BJ (cell line): ENCODE measurements at regions of chr3 and their contacts with region 1.

Region 1: DNA sequence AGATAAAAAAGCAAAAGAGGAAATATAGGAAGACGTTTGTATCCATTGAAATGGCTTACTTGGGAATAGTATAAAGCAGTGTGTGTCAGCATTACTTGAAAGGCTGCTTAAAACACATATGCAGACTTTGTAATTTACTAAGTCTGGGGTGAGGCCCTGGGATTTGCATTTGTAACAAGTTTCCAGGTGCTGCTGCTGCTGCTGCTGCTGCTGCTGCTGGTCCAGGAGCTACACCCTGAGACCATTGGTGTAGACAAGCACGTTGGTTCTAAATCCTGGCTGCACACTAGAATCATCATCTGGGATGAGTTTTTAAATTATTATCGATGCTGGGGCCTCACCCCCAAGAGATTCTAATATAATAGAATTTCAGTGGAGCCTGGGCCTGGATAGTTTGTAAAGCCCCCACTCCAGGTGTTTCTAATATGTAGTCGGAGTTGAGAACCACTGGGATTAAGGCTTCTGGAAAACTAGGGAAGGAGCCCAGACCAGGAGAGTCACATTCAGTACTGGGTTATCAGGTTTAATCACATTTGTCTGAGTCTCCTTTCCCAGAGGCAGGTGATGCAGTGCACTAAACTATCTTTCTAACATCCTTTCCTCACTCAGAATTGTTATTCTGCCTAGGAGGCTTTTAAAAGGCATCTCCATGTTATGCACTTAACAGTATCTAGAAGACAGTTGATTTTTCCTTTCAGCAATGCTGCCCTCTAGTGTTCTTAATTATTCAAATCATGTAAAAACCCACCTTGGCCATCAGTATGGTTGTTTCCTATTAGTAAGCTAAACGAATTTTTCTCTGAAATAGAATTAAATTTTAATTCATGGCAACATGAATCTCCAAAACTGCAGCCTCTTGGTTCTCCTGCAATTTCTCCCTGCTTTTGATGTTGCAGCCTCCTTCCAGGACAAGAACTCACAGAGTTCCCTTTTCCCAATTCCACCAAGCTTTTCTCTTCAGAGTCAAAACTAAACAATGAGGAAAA is 45.4 kb downstream of the SSR3 start:
- DNase-seq: no peak
- H3K4me3 ChIP-seq: no peak overlapping the region
- H3K27me3 ChIP-seq: peaks cover 3% of the 10 kb centered on the region
- CTCF ChIP-seq: peak; percentile 47

Region 2: DNA sequence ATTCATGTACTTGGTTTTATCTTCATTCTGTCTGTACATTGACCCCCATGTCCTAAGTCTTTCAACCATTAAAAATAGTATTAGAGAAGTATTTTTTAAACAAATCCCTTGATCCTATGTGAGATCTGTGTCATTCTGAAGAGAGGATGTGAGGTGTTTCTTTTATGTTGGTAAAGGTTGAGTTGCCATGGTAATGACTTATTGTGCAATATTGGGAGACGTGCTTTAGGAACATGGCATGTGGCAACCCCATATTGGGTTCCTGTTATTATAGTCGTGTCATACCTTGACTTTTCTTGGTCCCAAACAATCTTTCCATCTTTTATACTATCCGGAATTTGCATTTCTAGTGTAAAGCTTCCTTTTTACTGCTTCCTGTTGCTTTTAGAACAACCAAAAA is 186.0 kb before region 1 on chr3:
- CTCF ChIA-PET with region 1: no interaction called
- POLR2A ChIA-PET with region 1: no interaction called
- DNase-seq: no peak
- H3K4me3 ChIP-seq: no peak overlapping the region
- H3K27me3 ChIP-seq: no peaks in the 10 kb centered on the region; the same call in 1 of the 2 replicates
- CTCF ChIP-seq: no peak

Region 3: DNA sequence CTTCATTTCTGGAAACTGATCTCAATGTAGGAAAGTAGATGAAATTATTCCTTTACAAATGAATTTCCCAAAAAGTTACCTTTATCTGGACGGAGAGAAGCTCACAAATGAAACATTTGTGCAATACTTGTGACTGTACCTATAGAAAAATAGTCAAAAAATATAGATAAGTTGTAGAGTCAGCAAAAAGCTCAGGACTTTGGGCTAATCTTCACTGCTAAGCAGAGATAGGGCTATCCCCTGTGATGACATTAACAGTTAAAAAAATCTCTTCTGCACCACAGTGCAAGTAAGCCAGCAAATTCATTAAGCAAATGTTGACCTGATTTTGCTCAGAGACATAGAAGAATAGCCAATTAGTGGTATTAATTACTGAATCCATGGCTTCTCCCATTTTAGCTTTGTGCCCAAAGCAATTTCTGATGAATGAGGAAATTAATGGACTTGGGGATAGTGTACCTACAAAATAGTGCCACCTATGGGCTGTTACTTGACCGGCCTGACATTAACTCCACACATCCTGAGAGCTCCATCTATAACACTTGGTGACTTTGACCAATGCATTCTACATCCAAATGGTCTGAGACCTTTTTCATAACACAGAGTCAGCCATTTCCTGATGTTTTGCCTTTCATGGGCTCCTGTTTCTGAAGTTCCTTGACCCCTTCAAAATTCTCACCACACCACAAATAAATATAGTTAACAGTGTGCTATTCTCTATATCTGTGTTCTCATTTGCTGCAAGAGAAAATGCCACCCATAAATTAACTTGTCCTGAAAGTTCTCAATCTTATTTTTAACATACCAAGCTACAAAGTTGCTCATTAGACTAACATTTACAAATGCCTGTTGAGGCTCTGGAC is 59.5 kb before region 1 on chr3:
- CTCF ChIA-PET with region 1: interaction called, 12 read pairs
- POLR2A ChIA-PET with region 1: no interaction called
- DNase-seq: no peak
- H3K4me3 ChIP-seq: no peak overlapping the region
- H3K27me3 ChIP-seq: peaks cover 3% of the 10 kb centered on the region
- CTCF ChIP-seq: peak; percentile 61

Region 4: GRCh38 chr3:156497326-156497725 is 12.2 kb before region 1 on chr3:
- CTCF ChIA-PET with region 1: interaction called, 12 read pairs
- POLR2A ChIA-PET with region 1: no interaction called
- DNase-seq: no peak
- H3K4me3 ChIP-seq: no peak overlapping the region
- H3K27me3 ChIP-seq: no peaks in the 10 kb centered on the region
- CTCF ChIP-seq: no peak

Region 5: DNA sequence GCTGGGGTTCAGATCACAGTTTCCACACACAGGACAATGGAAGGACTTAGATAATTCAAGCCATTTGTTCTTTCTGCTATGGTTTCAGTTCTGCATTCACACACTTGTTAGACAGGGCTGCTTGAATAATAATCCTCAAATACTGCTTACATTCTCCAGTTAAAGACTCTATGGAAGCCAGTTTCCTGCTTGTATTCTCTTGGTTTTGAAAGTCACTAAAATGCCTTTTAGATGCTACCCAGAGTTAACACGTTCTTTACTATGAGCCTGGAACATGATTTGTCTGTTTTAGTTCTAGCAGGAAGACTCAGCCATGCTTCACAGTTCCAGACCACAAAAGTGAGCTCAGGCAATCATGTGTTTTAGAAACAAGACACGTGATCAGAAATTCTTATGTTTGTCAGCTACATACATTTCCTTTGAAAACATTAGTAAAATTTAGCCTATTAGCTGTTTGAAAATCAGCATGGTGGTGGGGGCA is 469.0 kb after region 1 on chr3:
- CTCF ChIA-PET with region 1: no interaction called
- POLR2A ChIA-PET with region 1: no interaction called
- DNase-seq: no peak
- H3K4me3 ChIP-seq: no peak overlapping the region
- H3K27me3 ChIP-seq: no peaks in the 10 kb centered on the region
- CTCF ChIP-seq: no peak